ENCODE measurements at regions of chr12 and their contacts with region 1.

Region 1: DNA sequence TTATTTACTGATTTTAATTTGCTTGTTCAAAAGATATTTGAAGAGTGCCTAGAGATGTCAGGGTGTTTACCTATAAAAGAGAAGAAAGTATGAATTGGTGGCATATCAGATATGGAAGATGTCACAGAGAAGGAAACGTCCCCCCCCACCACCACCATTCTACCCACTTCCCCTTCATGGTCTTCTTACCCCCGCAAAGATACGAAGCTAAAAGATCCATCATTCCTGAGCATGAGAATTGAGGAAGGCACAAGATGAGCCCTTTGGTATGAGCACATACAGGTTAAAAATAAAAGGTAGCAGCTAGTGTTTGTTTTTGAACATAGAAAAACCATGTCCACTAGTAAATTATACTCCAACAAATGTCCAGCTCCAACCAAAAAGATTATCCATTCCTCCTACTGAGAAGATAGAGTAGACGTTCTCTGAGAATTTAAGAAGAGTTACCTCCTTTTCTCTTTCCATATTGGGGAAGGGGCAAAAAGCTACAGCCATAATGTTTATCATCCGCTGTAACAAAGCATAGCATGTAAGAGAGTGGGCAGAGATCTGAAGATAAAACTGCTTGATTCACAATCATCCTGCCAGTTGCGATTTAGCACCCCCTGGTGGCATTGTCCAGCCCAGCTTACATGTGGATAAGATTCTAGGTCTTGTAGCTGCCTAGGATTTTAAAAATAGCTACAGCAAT is 29.1 kb downstream of the NFYB start:
- DNase-seq: peak; percentile 88
- H3K4me3 Mint-ChIP-seq: no peak overlapping the region
- H3K27ac Mint-ChIP-seq: no peak overlapping the region
- H3K4me1 Mint-ChIP-seq: peaks cover 5% of the 10 kb centered on the region
- H3K27me3 Mint-ChIP-seq: no peaks in the 10 kb centered on the region

Region 2: GRCh38 chr12:103877934-103878510 is 230.9 kb before region 1 on chr12:
- CTCF ChIA-PET with region 1: interaction called, 20 read pairs
- POLR2A ChIA-PET with region 1: no interaction called
- DNase-seq: peak; percentile 63
- H3K4me3 Mint-ChIP-seq: no peak overlapping the region
- H3K27ac Mint-ChIP-seq: no peak overlapping the region
- H3K4me1 Mint-ChIP-seq: peaks cover 21% of the 10 kb centered on the region
- H3K27me3 Mint-ChIP-seq: peaks cover 1% of the 10 kb centered on the region

Region 3: GRCh38 chr12:104057771-104058197 is 51.1 kb before region 1 on chr12:
- CTCF ChIA-PET with region 1: interaction called, 98 read pairs
- POLR2A ChIA-PET with region 1: interaction called, 6 read pairs
- DNase-seq: no peak
- H3K4me3 Mint-ChIP-seq: no peak overlapping the region
- H3K27ac Mint-ChIP-seq: no peak overlapping the region
- H3K4me1 Mint-ChIP-seq: no peaks in the 10 kb centered on the region
- H3K27me3 Mint-ChIP-seq: peaks cover 51% of the 10 kb centered on the region

Region 4: DNA sequence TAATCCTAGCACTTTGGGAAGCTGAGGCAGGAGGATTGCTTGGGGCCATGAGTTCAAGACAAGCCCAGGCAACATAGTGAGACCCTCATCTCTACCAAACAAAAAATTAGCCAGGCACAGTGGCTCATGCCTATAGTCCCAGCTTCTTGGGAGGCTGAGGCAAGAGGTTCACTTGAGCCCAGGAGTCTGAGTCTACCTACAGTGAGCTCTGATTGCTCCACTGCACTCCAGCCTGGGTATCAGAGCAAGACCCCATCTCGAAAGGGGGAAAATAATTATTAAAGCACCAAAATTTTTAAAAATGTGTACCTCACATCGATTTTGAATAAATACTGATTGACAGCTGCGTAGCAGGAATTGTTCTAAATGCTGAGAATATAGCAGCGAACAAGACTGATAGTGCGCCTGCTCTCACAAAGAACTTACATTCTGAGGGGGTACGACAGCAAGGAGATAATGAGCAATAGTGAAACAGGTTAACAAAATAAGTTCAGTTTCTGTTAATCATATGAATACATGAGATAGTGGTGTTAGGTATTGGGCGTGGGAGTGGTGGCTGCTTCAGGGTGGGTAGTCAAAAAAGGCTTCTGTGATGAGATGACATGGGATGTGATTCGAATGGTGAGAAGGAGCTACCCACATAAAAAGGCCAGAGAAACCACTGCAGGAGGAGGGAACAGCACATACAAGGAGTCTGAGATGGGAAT is 25.0 kb before region 1 on chr12:
- CTCF ChIA-PET with region 1: interaction called, 11 read pairs
- POLR2A ChIA-PET with region 1: no interaction called
- DNase-seq: no peak
- H3K4me3 Mint-ChIP-seq: no peak overlapping the region
- H3K27ac Mint-ChIP-seq: no peak overlapping the region
- H3K4me1 Mint-ChIP-seq: peaks cover 24% of the 10 kb centered on the region
- H3K27me3 Mint-ChIP-seq: no peaks in the 10 kb centered on the region

Region 5: GRCh38 chr12:104097954-104098353 is 10.9 kb before region 1 on chr12:
- CTCF ChIA-PET with region 1: interaction called, 19 read pairs
- POLR2A ChIA-PET with region 1: interaction called, 5 read pairs
- DNase-seq: no peak
- H3K4me3 Mint-ChIP-seq: no peak overlapping the region
- H3K27ac Mint-ChIP-seq: no peak overlapping the region
- H3K4me1 Mint-ChIP-seq: peaks cover 9% of the 10 kb centered on the region
- H3K27me3 Mint-ChIP-seq: no peaks in the 10 kb centered on the region

Region 6: DNA sequence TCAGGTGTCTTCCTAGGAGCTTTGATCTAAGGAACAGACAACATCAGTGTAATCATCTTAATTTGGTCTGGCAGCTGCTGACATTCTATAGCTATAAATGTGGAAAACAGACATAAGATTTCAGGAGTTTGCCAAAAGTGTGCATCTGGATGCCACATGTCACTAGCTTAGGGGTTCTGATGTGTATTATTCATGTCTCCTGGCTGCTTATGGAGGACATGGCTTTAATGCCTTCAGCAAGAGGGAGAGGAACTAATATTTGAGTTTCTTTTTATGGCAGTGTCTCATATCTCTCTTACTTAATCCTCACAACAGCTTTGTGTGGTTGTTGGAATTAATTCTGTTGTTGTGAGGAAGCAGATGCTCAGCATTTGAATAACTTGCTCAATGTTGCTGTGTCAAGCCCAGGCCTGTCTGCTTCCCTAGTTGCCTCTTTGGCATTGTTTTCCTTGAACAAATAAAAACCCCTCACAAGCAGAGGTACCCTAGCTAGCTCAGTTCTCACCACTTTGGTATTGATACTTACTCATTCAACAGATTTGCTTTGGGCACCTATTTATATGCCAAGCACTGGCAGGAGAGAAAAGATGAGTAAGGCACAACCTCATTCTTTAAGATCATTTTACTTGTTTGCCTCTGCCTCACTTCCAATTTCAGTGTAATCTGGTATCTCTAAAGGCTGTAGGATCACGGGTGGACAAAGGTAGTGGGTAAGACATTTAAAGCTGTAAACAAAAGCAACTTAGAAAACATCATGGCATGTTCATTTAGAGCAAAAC is 154.9 kb after region 1 on chr12:
- CTCF ChIA-PET with region 1: no interaction called
- POLR2A ChIA-PET with region 1: no interaction called
- DNase-seq: no peak
- H3K4me3 Mint-ChIP-seq: no peak overlapping the region
- H3K27ac Mint-ChIP-seq: no peak overlapping the region
- H3K4me1 Mint-ChIP-seq: no peaks in the 10 kb centered on the region
- H3K27me3 Mint-ChIP-seq: peaks cover 3% of the 10 kb centered on the region

Measured in activated CD4-positive, alpha-beta memory T cell treated with anti-CD3 and anti-CD28 coated beads, Interleukin-2, amount 10 ng/mL, durations not matched to agents 7 days and 5 days (primary cell).